Activated CD8-positive, alpha-beta T cell treated with anti-CD3 and anti-CD28 coated beads, Interleukin-2, amount 10 ng/mL, durations not matched to agents 7 days and 5 days (primary cell): ENCODE measurements at regions of chr17 and their contacts with region 1.

Region 1: GRCh38 chr17:64129764-64130558 is at the start of gene ERN1:
- DNase-seq: peak; percentile 93
- ATAC-seq: peak; percentile 94
- H3K4me3 Mint-ChIP-seq: peak within 1 kb of the TSS; percentile 92
- H3K27ac Mint-ChIP-seq: peak within 1 kb of the TSS; percentile 92
- H3K4me1 Mint-ChIP-seq: peaks cover 36% of the 10 kb centered on the region
- H3K27me3 Mint-ChIP-seq: no peaks in the 10 kb centered on the region
- total RNA-seq, gene ERN1: 13.0 to 17.9 TPM

Region 2: GRCh38 chr17:63919311-63919723 is 210.6 kb before region 1 on chr17:
- CTCF ChIA-PET with region 1: interaction called, 68 read pairs
- POLR2A ChIA-PET with region 1: no interaction called
- DNase-seq: peak; percentile 79
- ATAC-seq: peak; percentile 93
- H3K4me3 Mint-ChIP-seq: no peak overlapping the region
- H3K27ac Mint-ChIP-seq: peak overlapping the region; percentile 47
- H3K4me1 Mint-ChIP-seq: peaks cover 8% of the 10 kb centered on the region
- H3K27me3 Mint-ChIP-seq: peaks cover 16% of the 10 kb centered on the region

Region 3: GRCh38 chr17:64020056-64020766 is 109.8 kb before region 1 on chr17 and contains the start of gene ICAM2:
- CTCF ChIA-PET with region 1: interaction called, 645 read pairs
- POLR2A ChIA-PET with region 1: interaction called, 20 read pairs
- DNase-seq: peak; percentile 96
- ATAC-seq: peak; percentile 78
- H3K4me3 Mint-ChIP-seq: peak within 1 kb of the TSS; percentile 96
- H3K27ac Mint-ChIP-seq: peak within 1 kb of the TSS; percentile 100
- H3K4me1 Mint-ChIP-seq: peaks cover 75% of the 10 kb centered on the region
- H3K27me3 Mint-ChIP-seq: no peaks in the 10 kb centered on the region
- total RNA-seq, gene ICAM2: 48.4 to 51.3 TPM

Region 4: GRCh38 chr17:64056269-64057005 is 73.5 kb before region 1 on chr17:
- CTCF ChIA-PET with region 1: interaction called, 287 read pairs
- POLR2A ChIA-PET with region 1: interaction called, 16 read pairs
- DNase-seq: no peak
- ATAC-seq: no peak
- H3K4me3 Mint-ChIP-seq: no peak overlapping the region
- H3K27ac Mint-ChIP-seq: peak overlapping the region; percentile 77
- H3K4me1 Mint-ChIP-seq: peaks cover 46% of the 10 kb centered on the region
- H3K27me3 Mint-ChIP-seq: no peaks in the 10 kb centered on the region

Region 5: GRCh38 chr17:64087626-64088025 is 42.3 kb before region 1 on chr17:
- CTCF ChIA-PET with region 1: interaction called, 58 read pairs
- POLR2A ChIA-PET with region 1: interaction called, 8 read pairs
- DNase-seq: no peak
- ATAC-seq: no peak
- H3K4me3 Mint-ChIP-seq: no peak overlapping the region
- H3K27ac Mint-ChIP-seq: no peak overlapping the region
- H3K4me1 Mint-ChIP-seq: peaks cover 40% of the 10 kb centered on the region
- H3K27me3 Mint-ChIP-seq: no peaks in the 10 kb centered on the region

Region 6: DNA sequence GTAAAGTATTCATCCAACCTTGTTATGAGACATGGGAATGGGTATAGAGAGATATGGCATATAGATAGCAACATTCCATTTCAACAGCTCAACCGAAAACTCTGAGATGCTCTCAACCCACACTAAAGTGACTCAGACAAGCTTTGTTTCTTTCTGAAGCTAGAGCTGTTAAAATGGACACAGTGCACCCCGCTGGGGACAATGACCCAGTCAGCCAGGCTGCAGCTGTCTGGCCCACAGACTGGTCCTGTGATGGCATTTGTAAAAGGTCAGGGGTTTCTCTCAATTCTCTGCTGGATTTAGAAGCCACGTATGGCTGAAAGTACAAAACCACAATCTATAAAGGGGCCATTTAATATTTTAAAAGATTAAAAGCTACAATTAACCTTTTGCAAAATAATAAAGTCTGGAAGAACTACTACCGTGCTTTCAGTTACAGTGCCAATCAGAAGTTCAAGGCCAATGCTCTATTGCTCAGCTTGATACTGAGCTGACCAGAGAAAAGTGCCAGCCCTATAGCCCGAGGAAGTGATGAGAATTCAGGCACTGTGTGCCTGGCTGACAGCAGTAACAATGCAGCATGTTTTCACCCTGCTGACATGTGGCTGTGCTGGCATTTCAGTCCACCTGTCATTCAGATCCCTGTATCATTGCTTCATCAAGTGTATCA is 72.8 kb after region 1 on chr17:
- CTCF ChIA-PET with region 1: no interaction called
- POLR2A ChIA-PET with region 1: no interaction called
- DNase-seq: no peak
- ATAC-seq: no peak
- H3K4me3 Mint-ChIP-seq: no peak overlapping the region
- H3K27ac Mint-ChIP-seq: no peak overlapping the region
- H3K4me1 Mint-ChIP-seq: peaks cover 13% of the 10 kb centered on the region
- H3K27me3 Mint-ChIP-seq: no peaks in the 10 kb centered on the region

Region 7: GRCh38 chr17:64281962-64282727 is 152.2 kb after region 1 on chr17:
- CTCF ChIA-PET with region 1: interaction called, 18 read pairs
- POLR2A ChIA-PET with region 1: no interaction called
- DNase-seq: peak; percentile 69
- ATAC-seq: peak; percentile 55
- H3K4me3 Mint-ChIP-seq: no peak overlapping the region
- H3K27ac Mint-ChIP-seq: no peak overlapping the region
- H3K4me1 Mint-ChIP-seq: peaks cover 6% of the 10 kb centered on the region
- H3K27me3 Mint-ChIP-seq: no peaks in the 10 kb centered on the region

Region 8: DNA sequence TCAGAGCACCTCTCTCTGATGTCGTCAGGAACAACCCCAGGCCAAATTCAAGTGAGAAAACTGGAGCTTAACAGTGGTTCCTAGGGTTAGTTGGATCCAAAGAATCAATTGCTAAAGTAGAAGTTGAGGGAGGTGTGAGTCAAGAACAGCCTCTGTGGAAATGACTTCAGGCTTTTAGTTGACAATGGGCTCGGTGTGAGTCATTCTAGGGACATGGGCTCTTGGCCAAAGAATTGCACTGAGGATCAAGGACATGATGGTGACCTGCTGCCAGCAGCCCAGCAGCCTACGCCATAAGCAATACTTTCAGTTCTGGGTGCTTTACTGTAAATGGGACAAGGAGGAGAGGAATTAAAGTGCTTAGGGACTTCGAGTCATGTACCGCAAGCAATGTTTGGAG is 564.2 kb after region 1 on chr17:
- CTCF ChIA-PET with region 1: no interaction called
- POLR2A ChIA-PET with region 1: no interaction called
- DNase-seq: no peak
- ATAC-seq: no peak
- H3K4me3 Mint-ChIP-seq: no peak overlapping the region
- H3K27ac Mint-ChIP-seq: no peak overlapping the region
- H3K4me1 Mint-ChIP-seq: no peaks in the 10 kb centered on the region
- H3K27me3 Mint-ChIP-seq: no peaks in the 10 kb centered on the region